Gastrocnemius medialis (tissue), 4 donors: ENCODE measurements at regions of chr1 and their contacts with region 1.

Region 1: GRCh38 chr1:235050911-235051360 is 77.7 kb downstream of the TOMM20 start:
- DNase-seq: no peak
- ATAC-seq: no peak
- H3K4me3 ChIP-seq: no peak overlapping the region
- H3K27ac ChIP-seq: peak overlapping the region in 2 of 4 donors; percentile 19 to 38
- H3K4me1 ChIP-seq: peaks cover 27 to 36% of the 10 kb centered on the region in 2 donors
- H3K27me3 ChIP-seq: no peaks in the 10 kb centered on the region
- CTCF ChIP-seq: no peak
- POLR2A ChIP-seq: no peak

Region 2: DNA sequence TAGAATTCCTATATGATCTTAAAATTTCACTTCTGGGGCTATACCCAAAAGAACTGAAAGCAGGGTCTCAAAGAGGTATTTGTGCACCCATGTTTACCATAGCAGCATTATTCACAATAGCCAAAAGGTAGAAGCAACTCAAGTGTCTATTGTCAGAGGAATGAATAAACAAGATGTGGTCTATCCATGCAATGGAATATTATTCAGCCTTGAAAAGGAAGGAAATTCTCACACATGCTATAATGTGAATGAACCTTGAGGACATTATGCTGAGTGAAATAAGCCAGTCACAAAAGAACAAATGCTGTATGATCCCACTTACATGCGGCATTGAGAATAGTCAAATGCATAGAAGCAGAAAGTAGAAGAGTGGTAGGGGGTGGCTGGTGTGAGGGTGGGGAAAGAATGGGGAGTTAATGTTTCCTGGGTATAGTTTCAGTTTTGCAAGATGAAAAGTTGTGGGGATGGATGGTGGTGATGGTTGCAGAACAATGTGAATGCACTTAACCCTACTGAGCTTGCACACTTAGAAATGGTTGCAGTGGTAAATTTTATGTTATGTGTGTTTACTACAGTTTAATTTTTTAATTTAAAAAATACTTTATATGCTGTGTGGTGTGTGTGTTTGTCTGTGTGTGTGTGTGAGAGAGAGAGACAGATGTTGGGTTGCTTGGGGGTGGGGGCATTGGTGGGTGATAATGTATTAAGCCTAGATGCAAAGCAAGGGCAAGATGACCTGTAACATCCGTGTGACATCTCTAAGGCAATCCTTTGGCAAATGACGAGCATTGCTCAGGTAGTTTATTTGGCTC is 44.6 kb before region 1 on chr1:
- in situ Hi-C with region 1: loop called in 1 of 4 experiments (anchors 10 kb)
- intact Hi-C with region 1: no loop called
- DNase-seq: no peak
- ATAC-seq: no peak
- H3K4me3 ChIP-seq: no peak overlapping the region
- H3K27ac ChIP-seq: no peak overlapping the region
- H3K4me1 ChIP-seq: no peaks in the 10 kb centered on the region
- H3K27me3 ChIP-seq: no peaks in the 10 kb centered on the region
- CTCF ChIP-seq: no peak
- POLR2A ChIP-seq: no peak